ENCODE measurements at regions of chr5 and their contacts with region 1.

Region 1: DNA sequence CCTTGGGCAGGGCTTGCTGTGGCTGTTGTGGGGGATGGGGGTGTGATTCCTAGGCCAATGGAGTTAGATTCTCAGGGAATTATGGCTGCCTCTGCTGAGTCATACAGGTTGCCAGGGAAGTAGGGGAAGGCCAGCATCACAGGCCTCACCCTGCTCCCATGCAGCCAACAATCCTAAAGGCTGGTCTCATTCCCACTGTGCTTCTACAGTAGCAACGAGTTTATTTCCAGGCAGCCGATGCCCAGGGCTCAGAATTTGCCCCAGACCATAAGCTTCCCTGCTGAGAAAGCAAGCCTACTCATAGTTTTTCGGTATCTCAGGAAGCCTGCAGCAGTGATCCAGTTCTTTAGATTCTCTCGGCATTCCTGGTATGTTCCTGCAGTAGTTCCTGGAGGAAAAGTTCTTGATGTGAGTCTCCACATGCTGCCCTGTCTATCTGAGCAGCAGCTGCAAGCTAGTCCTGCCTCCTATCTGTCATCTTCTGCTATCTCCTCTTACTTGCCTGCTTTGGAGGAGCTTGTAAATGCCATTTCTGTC is 59.3 kb upstream of the SELENOP start:
- DNase-seq: no peak
- H3K4me3 ChIP-seq: no peak overlapping the region
- H3K27ac ChIP-seq: no peak overlapping the region
- H3K4me1 ChIP-seq: peaks cover 0 to 7% (median 2%) of the 10 kb centered on the region in 3 donors
- H3K27me3 ChIP-seq: no peaks in the 10 kb centered on the region
- CTCF ChIP-seq: peak in 1 of 6 experiments; percentile 10
- POLR2A ChIP-seq: no peak

Region 2: GRCh38 chr5:41940641-41941040 is 930.3 kb before region 1 on chr5:
- intact Hi-C with region 1: no loop called
- DNase-seq: no peak
- H3K4me3 ChIP-seq: no peak overlapping the region
- H3K27ac ChIP-seq: no peak overlapping the region
- H3K4me1 ChIP-seq: no peaks in the 10 kb centered on the region
- H3K27me3 ChIP-seq: no peaks in the 10 kb centered on the region
- CTCF ChIP-seq: no peak
- POLR2A ChIP-seq: no peak

Region 3: DNA sequence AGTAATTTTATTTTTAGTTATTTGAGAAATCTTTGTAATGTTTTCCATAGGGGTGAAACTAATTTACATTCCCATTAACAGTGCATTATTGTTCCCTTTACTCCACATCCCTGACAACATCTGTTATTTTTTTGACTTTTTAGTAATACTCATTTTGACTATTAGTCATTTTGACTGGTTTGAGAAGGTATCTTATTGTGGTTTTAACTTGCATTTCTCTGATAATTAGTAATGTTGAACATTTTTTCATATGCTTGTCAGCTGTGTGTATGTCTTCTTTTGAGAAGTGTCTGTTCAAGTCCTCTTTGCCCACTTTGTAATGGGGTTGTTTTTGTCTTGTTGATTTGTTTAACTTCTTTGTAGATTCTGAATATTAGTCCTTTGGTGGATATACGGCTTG is 86.8 kb before region 1 on chr5:
- intact Hi-C with region 1: loop called (anchors 10 kb)
- DNase-seq: no peak
- H3K4me3 ChIP-seq: no peak overlapping the region
- H3K27ac ChIP-seq: no peak overlapping the region
- H3K4me1 ChIP-seq: no peaks in the 10 kb centered on the region
- H3K27me3 ChIP-seq: no peaks in the 10 kb centered on the region
- CTCF ChIP-seq: no peak
- POLR2A ChIP-seq: no peak

Region 4: GRCh38 chr5:43085453-43085852 is 214.5 kb after region 1 on chr5:
- intact Hi-C with region 1: no loop called
- DNase-seq: no peak
- H3K4me3 ChIP-seq: no peak overlapping the region
- H3K27ac ChIP-seq: no peak overlapping the region
- H3K4me1 ChIP-seq: no peaks in the 10 kb centered on the region
- H3K27me3 ChIP-seq: no peaks in the 10 kb centered on the region
- CTCF ChIP-seq: no peak
- POLR2A ChIP-seq: no peak